Ascending aorta (tissue), 2 donors: ENCODE measurements at regions of chr5 and their contacts with region 1.

Region 1: DNA sequence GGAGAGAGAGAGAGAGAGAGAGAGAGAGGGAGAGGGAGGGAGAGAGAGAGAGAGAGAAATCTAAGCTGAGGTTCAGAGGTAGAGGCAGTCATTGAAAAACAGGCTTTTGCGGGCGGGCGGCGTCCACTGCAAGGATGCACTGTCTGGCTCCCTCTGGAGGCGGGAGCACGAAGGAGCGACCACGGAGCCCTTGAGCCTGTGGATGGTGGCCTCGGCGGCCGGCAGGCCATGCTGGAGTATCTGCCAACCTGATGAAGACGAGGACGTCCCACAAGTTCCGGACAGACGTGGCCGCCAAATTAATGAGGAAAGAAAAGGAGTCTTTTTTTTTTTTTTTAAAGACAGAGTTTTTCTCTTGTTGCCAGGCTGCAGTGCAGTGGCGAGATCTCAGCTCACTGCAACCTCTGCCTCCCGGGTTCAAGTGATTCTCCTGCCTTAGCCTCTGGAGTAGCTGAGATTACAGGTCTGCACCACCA is 2.2 kb upstream of the CCDC125 start:
- DNase-seq: peak; percentile 13 to 92
- H3K4me3 ChIP-seq: peak overlapping the region in 1 of 2 donors; percentile 22
- H3K27ac ChIP-seq: no peak overlapping the region
- H3K4me1 ChIP-seq: peaks cover 0 to 9% of the 10 kb centered on the region in 2 donors
- H3K27me3 ChIP-seq: no peaks in the 10 kb centered on the region
- CTCF ChIP-seq: peak; percentile 61 to 86 (median 82)

Region 2: DNA sequence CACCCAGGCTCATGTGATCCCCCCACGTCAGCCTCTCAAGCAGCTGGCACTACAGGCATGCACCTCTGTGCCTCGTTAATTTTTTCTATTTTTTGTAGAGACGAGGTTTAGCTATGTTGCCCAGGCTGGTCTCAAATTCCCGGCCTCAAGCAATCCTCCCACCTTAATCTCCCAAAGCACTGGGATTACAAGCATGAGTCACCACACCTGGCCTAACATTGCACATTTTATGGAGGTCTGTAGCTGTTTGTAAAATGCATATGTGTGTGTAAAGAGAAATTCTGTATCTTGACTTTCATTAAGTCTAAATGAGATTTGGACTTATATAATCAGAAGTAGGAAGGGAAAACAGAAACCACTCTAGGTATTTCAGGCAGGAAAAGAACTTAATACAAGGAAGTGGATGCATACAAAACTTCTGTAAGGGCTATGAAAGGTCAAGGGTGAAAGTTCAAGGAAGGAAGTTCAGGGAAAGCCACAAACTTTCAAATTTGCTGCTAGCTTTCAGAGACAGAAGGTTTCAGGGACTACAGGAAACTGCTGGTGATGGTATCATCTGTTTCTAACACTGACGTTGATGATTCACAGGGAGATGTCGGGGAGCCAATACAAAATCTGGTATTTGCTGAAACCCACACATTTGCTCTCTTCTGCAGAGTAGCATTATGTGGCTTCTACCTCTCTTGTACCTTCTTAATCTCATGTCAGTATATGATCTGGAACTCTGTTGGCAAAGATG is 909.9 kb before region 1 on chr5:
- intact Hi-C with region 1: no loop called
- DNase-seq: no peak
- H3K4me3 ChIP-seq: no peak overlapping the region
- H3K27ac ChIP-seq: no peak overlapping the region
- H3K4me1 ChIP-seq: peaks cover 0 to 3% of the 10 kb centered on the region in 2 donors
- H3K27me3 ChIP-seq: no peaks in the 10 kb centered on the region
- CTCF ChIP-seq: no peak

Region 3: DNA sequence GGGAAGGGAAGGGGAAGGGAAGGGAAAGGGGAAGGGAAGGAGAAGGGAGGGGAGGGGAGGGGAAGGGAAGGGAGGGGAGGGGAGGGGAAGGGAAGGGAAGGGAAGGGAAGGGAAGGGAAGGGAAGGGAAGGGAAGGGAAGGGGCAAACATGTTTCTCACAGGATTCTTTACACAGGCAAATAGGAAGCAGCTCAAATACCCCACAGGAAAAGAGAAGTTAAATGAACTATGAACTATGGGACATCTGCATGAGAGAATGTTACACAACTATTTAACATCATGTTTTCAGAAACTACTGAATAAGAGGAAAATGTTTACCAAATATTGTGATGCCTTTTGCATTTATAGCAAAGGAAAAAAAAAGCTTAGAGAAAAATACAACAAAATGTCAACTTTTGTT is 366.4 kb before region 1 on chr5:
- intact Hi-C with region 1: no loop called
- DNase-seq: no peak
- H3K4me3 ChIP-seq: no peak overlapping the region
- H3K27ac ChIP-seq: no peak overlapping the region
- H3K4me1 ChIP-seq: no peaks in the 10 kb centered on the region
- H3K27me3 ChIP-seq: no peaks in the 10 kb centered on the region
- CTCF ChIP-seq: no peak

Region 4: GRCh38 chr5:68983959-68984358 is 350.9 kb before region 1 on chr5:
- intact Hi-C with region 1: no loop called
- DNase-seq: no peak
- H3K4me3 ChIP-seq: no peak overlapping the region
- H3K27ac ChIP-seq: no peak overlapping the region
- H3K4me1 ChIP-seq: no peaks in the 10 kb centered on the region
- H3K27me3 ChIP-seq: no peaks in the 10 kb centered on the region
- CTCF ChIP-seq: no peak

Region 5: DNA sequence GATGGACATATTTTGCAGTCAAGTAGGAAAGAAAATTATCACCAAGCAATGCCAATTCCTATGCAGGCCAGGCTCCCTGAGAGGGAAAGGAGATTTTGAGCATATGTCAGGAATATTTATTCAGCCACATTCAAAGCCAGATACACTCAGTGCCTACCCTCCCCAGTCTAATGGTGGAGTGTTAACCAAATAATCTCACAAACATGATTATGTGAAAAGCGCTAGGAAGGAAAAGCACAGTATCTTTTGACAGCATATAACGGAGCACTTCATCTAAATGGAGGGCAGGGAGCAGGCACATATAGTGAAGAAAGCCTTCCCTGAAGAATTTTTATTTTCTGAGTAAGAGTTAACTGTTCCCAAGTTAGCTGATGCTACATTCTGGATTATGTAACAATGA is 321.4 kb before region 1 on chr5:
- intact Hi-C with region 1: no loop called
- DNase-seq: no peak
- H3K4me3 ChIP-seq: no peak overlapping the region
- H3K27ac ChIP-seq: no peak overlapping the region
- H3K4me1 ChIP-seq: no peaks in the 10 kb centered on the region
- H3K27me3 ChIP-seq: no peaks in the 10 kb centered on the region
- CTCF ChIP-seq: no peak

Region 6: DNA sequence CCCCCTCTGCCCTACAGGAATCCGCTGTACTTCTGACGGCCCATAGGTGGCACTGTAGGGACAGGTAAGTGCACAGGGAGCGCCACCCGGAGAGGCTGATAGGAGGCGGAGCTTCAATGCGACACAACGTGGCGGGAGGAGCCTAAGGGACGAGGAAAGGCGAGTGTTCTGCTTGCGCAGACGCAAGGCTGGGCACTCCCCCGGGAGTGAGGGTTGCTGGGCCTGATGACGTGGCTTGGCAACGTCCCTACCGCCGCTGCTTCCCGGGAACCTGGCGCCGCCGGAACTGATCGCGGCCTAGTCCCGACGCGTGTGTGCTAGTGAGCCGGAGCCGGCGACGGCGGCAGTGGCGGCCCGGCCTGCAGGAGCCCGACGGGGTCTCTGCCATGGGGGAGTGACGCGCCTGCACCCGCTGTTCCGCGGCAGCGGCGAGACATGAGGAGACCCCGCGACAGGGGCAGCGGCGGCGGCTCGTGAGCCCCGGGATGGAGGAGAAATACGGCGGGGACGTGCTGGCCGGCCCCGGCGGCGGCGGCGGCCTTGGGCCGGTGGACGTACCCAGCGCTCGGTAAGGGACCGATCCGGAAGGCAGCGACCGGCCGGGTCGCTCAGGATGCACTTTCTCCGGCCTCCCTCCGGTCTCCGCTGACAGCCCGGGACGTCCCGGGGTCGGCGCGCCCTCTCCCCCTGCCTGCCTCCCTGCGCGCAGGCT is 240.9 kb before region 1 on chr5 and contains the start of gene SLC30A5:
- intact Hi-C with region 1: loop called (anchors 1 kb)
- DNase-seq: peak; percentile 99 to 100
- H3K4me3 ChIP-seq: peak within 1 kb of the TSS; percentile 86 to 93
- H3K27ac ChIP-seq: peak within 1 kb of the TSS; percentile 91 to 94
- H3K4me1 ChIP-seq: peaks cover 0 to 12% of the 10 kb centered on the region in 2 donors
- H3K27me3 ChIP-seq: no peaks in the 10 kb centered on the region
- CTCF ChIP-seq: peak; percentile 90 to 92 (median 90)
- total RNA-seq, gene SLC30A5: 20.6 TPM

Region 7: DNA sequence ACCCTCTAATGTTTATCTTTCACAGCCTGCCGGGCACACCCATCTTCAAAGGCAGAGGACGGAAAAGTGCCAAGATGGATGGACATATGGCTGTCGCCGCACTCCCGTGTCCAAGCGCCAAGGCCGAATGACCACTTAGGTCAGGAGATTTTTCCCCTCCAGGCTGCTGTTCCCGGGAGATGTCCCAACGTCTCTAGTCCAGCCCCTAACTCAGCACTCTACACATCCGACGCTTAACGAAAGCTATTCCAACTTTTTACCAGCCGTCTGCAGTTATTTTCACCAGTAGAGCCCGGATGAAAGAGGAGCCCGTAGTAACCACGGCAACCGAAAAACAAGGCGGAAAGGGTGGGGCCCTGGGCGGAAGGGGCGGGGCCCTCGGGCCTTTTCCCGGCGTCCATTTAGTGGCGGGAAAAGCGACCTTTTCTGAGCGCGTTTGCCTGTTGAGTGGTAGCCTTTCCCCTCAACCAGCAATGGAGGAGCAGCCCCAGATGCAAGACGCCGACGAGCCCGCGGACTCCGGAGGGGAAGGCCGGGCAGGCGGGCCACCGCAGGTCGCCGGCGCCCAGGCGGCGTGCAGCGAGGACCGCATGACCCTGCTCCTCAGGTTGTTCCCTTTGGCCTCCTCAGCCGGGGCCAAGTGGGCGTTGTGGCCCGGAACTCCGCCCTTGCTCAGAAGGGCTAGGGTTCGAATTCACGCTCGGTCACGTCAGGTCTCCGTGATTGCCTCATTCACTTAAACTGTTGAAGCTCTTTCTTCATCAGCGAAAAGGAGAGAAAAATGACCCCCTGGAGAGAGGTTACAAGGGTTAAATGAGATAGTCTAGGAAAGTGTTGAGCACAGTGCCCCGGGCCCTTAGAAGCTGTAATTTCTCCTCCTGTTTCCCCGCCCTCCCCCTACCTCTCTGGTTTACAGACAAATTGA is 145.4 kb before region 1 on chr5 and contains the start of gene CENPH:
- intact Hi-C with region 1: loop called (anchors 1 kb)
- DNase-seq: peak; percentile 52 to 93
- H3K4me3 ChIP-seq: peak within 1 kb of the TSS; percentile 82 to 85
- H3K27ac ChIP-seq: peak within 1 kb of the TSS; percentile 75
- H3K4me1 ChIP-seq: peaks cover 0 to 4% of the 10 kb centered on the region in 2 donors
- H3K27me3 ChIP-seq: no peaks in the 10 kb centered on the region
- CTCF ChIP-seq: no peak
- total RNA-seq, gene CENPH: not detected

Region 8: GRCh38 chr5:69271376-69271775 is 63.5 kb before region 1 on chr5:
- intact Hi-C with region 1: loop called (anchors 10 kb)
- DNase-seq: no peak
- H3K4me3 ChIP-seq: no peak overlapping the region
- H3K27ac ChIP-seq: no peak overlapping the region
- H3K4me1 ChIP-seq: no peaks in the 10 kb centered on the region
- H3K27me3 ChIP-seq: no peaks in the 10 kb centered on the region
- CTCF ChIP-seq: no peak